Calu3 (cell line): ENCODE measurements at regions of chr9 and their contacts with region 1.

Region 1: DNA sequence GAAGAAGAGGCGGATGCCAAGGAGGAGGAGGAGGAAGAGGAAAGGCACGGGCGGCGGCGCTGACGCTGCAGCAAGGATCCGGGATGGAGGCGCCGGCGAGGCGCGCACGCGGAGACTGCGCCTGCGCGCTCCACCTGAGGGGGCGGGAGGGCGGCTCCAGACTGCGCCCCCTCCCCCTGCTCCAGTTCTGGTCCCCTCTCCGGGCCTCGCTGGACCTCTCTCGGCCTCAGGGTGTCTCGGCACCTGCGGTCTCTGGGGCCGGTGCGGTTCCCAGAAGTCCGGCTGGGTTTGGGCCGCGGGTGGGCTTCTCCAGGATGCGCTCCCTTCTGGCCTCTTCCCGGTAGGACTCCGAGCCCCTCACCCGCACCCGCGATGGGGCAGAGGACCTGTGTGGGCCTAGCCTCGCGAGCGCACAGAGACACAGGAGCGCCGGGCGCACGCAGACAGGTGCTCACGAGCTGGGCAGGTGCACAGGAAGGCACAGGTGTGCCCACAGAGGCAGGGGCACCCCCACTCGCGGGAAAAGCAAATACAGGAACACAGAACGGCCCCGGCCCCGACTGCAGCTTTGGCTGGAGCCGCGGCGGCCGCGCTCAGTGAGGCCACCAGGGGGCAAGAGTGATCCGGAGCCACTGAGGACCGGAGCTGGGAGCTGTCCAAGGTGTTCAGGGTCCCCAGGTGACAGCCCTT is at the start of gene NPDC1:
- DNase-seq: peak; percentile 88
- H3K4me3 Mint-ChIP-seq: peak within 1 kb of the TSS; percentile 73
- H3K27ac Mint-ChIP-seq: no peak within 1 kb of the TSS
- H3K4me1 Mint-ChIP-seq: no peaks in the 10 kb centered on the region
- H3K27me3 Mint-ChIP-seq: no peaks in the 10 kb centered on the region
- CTCF ChIP-seq: peak; percentile 73
- total RNA-seq, gene NPDC1: 65.2 and 78.6 TPM in 2 replicates

Region 2: GRCh38 chr9:136916330-136917184 is 129.7 kb before region 1 on chr9:
- CTCF ChIA-PET with region 1: no interaction called
- intact Hi-C with region 1: no loop called
- DNase-seq: no peak
- H3K4me3 Mint-ChIP-seq: no peak overlapping the region
- H3K27ac Mint-ChIP-seq: no peak overlapping the region
- H3K4me1 Mint-ChIP-seq: no peaks in the 10 kb centered on the region
- H3K27me3 Mint-ChIP-seq: no peaks in the 10 kb centered on the region
- CTCF ChIP-seq: no peak

Region 3: DNA sequence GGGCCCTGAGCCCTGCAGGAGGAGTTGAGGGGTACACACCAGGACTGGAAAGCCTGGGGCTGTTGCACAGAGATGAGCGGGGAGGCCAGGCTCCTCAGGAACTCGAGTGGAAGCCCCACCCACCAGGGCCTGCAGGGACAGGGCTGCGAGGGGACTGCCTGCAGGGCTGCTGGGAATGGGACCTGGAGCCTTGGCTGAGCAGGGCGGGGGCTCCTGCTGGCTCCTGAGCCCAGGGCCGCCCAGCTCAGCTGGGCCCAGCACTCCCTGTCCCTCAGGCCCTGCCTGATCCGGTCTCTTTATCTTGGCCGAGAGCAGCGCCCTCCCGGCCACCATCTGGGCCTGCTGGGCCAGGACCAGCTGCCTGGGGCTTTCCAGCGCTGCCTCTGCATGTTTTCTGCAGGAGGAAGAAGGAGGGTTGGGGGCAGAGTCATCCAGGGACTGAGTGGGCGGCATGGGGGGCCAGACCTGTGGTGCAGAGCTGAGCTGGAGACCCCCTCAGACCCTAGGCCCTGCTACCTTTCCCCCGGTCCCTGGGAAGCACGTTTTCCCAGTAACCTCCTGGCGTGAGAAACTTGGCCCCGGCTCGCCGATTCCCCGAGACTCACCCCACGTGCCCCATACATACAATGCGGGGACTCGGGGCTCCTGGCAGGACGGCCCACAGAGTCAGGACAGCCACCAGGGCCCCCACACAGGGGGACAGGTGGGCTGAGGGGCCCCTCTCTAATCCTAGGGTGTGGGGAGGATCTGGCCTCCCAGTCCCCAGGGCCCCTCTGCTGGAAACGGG is 84.8 kb before region 1 on chr9:
- CTCF ChIA-PET with region 1: no interaction called
- intact Hi-C with region 1: no loop called
- DNase-seq: no peak
- H3K4me3 Mint-ChIP-seq: no peak overlapping the region
- H3K27ac Mint-ChIP-seq: no peak overlapping the region
- H3K4me1 Mint-ChIP-seq: no peaks in the 10 kb centered on the region
- H3K27me3 Mint-ChIP-seq: no peaks in the 10 kb centered on the region
- CTCF ChIP-seq: no peak

Region 4: GRCh38 chr9:136991993-136992818 is 54.0 kb before region 1 on chr9 and contains the start of gene PAXX:
- CTCF ChIA-PET with region 1: no interaction called
- intact Hi-C with region 1: no loop called
- DNase-seq: peak; percentile 93
- H3K4me3 Mint-ChIP-seq: peak within 1 kb of the TSS; percentile 82
- H3K27ac Mint-ChIP-seq: no peak within 1 kb of the TSS
- H3K4me1 Mint-ChIP-seq: no peaks in the 10 kb centered on the region
- H3K27me3 Mint-ChIP-seq: peaks cover 21% of the 10 kb centered on the region
- CTCF ChIP-seq: no peak
- total RNA-seq, gene PAXX: 38.3 and 43.7 TPM in 2 replicates

Region 5: DNA sequence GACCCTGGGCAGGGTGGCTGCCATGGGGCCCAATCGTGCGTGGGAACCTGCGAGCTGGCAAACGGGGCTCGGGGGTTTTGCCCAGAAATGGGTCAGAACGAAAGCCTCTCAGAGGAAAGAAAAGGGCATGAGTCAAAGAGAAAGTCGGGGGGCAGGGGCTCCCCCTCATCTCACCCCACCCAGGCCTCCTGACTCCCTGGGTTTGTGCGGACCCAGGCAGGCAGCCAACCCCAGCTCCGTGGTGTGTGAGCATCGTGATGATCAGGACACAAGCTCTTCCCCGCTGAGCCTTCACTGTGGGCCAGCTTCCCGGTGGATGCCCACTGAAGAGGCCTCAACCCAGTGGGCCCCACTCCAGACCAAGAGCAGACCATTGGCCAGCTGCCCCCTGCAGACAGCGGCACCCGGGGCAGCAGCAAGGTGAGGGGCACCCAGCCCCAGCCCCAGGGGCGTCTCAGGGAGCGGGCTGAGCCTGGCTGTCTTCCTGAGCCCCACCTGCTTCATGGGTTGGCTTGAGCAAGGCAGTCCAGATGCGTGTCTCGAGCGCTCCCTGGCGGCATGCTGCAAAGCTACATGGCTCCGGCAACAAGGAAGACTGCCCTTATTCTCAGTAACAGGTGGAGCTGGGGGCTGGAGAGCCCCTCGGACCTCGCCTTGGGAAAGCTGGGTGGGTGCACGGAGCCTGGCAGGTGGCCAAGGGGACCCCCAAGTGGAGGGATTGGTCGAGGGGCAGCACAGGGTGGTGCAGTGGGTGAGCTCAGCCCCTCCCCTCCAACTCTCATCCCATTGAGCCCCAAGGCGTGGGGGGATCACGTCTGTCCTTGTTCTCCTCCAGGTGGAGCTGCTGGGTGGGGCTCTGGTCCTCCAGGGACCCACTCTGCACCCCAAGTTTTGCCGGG is 11.1 kb before region 1 on chr9:
- CTCF ChIA-PET with region 1: interaction called, 10 read pairs
- intact Hi-C with region 1: no loop called
- DNase-seq: peak; percentile 79
- H3K4me3 Mint-ChIP-seq: peak overlapping the region; percentile 55
- H3K27ac Mint-ChIP-seq: no peak overlapping the region
- H3K4me1 Mint-ChIP-seq: peaks cover 8% of the 10 kb centered on the region
- H3K27me3 Mint-ChIP-seq: no peaks in the 10 kb centered on the region
- CTCF ChIP-seq: peak; percentile 64

Region 6: DNA sequence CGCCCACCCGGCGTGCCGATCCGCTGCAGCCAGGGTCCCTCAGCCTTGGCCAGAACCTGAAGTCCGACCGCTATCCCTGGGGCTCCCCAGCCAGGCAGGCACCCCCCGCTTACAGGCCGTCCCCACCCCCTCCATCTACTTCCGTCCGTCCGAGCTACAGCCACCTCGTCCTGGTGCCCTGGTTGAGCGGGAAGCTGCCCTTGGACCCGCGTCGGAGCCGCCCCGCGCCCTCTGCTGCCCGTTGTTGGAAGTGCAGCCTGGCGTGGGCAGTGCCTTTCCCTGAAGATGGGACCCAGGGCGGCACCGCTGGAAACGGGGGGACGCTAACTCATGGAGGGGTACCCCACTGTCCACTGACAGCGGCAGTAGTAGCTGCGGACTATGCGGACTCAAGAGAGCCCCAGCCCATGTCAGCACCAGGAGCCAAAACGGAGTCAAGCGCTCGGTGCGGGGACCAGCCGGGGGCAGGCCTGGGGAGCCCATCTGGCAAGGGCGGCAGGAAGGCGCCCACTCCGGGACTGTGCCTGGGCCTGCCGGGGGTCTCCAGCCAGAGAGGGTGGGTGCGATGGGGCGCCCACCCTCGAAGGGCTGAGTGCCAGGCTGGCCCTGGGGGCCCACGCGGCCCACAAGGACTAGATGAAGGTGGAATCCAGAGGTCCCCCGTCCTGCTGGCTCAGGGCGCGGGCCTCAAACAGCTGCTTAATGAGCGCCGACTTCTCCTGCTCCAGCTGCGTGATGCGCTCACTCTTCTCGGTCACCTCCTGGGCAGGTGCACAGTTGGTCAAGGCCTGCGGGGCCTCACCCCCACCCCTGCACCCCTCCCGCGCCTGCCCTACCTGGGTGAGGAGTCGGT is 18.0 kb after region 1 on chr9:
- CTCF ChIA-PET with region 1: interaction called, 27 read pairs
- intact Hi-C with region 1: no loop called
- DNase-seq: peak; percentile 68
- H3K4me3 Mint-ChIP-seq: no peak overlapping the region
- H3K27ac Mint-ChIP-seq: no peak overlapping the region
- H3K4me1 Mint-ChIP-seq: peaks cover 7% of the 10 kb centered on the region
- H3K27me3 Mint-ChIP-seq: no peaks in the 10 kb centered on the region
- CTCF ChIP-seq: peak; percentile 75

Region 7: DNA sequence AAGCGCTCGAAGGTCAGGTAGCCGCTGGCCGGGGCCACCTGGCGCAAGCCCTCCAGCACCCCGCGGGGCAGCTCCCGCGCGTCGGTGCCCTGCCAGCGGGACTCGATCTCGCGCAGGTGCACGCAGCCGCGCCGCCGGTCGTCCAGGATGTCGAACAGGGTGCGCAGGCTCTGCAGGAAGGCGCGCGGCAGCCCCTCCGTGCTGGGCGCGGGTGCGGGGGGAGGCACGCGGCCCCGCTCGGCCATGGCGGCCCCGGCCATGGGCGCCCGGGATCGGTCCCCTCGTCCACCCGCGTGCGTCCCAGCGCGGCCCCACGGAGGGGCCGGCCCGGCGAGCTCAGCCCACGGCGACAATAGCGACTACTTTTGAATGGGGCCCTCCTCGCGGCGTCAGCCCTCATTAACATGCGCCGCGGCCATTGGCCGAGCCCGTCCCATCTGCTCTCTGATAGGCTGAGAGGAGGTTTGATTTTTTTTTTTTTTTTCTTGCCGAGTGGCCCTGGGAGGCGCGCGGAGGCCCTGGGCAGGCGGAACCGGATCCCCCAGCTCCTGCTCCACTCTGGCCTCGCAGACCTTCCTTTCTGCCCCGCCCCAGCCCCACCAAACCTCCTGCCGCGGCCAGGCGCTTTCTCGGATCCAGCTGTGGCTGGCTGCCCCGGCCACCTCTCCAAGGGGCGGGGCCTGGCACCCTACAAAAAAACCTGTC is 24.1 kb after region 1 on chr9 and contains the start of gene SAPCD2:
- CTCF ChIA-PET with region 1: interaction called, 27 read pairs
- intact Hi-C with region 1: no loop called
- DNase-seq: peak; percentile 83
- H3K4me3 Mint-ChIP-seq: peak within 1 kb of the TSS; percentile 70
- H3K27ac Mint-ChIP-seq: peak within 1 kb of the TSS; percentile 44
- H3K4me1 Mint-ChIP-seq: peaks cover 16% of the 10 kb centered on the region
- H3K27me3 Mint-ChIP-seq: no peaks in the 10 kb centered on the region
- CTCF ChIP-seq: no peak
- total RNA-seq, gene SAPCD2: 38.4 and 41.1 TPM in 2 replicates

Region 8: GRCh38 chr9:137223078-137223970 is 177.1 kb after region 1 on chr9:
- CTCF ChIA-PET with region 1: no interaction called
- intact Hi-C with region 1: no loop called
- DNase-seq: peak; percentile 92
- H3K4me3 Mint-ChIP-seq: peak overlapping the region; percentile 70
- H3K27ac Mint-ChIP-seq: peak overlapping the region; percentile 69
- H3K4me1 Mint-ChIP-seq: peaks cover 19% of the 10 kb centered on the region
- H3K27me3 Mint-ChIP-seq: no peaks in the 10 kb centered on the region
- CTCF ChIP-seq: no peak